ENCODE measurements at regions of chr5 and their contacts with region 1.

Region 1: DNA sequence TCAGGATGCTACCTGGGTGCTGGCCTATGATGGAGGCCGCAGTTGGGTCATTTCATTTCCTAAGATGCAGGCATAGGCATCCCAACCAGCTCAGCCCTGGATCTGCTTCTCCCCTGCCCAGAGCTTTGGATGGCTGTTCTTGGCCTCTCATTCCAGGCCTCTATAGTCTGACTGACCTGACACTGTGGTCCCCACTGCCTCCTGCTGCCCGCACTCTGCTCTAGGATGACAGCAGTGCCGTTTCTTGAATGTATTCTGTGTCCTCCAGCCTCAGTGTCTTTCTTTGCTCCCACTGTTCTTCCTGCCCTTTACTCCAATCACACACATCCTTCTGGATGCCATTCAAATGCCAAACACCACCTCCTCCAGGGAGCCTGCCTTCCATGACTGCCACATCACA is 235.7 kb downstream of the HSPA4 start:
- DNase-seq: peak; percentile 67
- H3K4me3 Mint-ChIP-seq: no peak overlapping the region
- H3K27ac Mint-ChIP-seq: no peak overlapping the region
- H3K4me1 Mint-ChIP-seq: peaks cover 38% of the 10 kb centered on the region
- H3K27me3 Mint-ChIP-seq: no peaks in the 10 kb centered on the region
- CTCF ChIP-seq: peak; percentile 66

Region 2: GRCh38 chr5:133116601-133117000 is 170.9 kb before region 1 on chr5:
- CTCF ChIA-PET with region 1: interaction called, 141 read pairs
- POLR2A ChIA-PET with region 1: interaction called, 32 read pairs
- intact Hi-C with region 1: loop called (anchors 1 kb)
- DNase-seq: no peak
- H3K4me3 Mint-ChIP-seq: no peak overlapping the region
- H3K27ac Mint-ChIP-seq: no peak overlapping the region
- H3K4me1 Mint-ChIP-seq: peaks cover 10% of the 10 kb centered on the region
- H3K27me3 Mint-ChIP-seq: no peaks in the 10 kb centered on the region
- CTCF ChIP-seq: no peak

Region 3: DNA sequence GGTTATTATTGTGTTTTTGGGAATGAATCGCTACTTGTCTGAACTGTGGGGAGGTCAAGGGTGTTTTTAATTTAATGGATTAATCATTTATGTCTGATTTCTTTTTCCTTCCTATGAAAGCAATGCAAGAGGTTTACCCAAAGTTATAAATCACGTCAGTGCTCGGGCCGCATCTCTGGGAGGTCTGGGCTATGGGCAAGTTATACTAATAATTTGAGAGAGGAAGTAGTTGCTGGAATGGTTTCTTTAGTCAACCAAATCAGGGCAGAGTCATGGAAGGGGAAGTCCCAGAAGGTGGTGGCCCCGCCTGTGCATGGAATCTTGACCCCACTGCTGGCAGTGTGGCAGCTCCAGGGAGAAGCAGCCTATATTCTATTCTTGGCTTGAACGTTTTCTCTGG is 55.5 kb before region 1 on chr5:
- CTCF ChIA-PET with region 1: interaction called, 8 read pairs
- POLR2A ChIA-PET with region 1: interaction called, 19 read pairs
- intact Hi-C with region 1: no loop called
- DNase-seq: peak; percentile 31
- H3K4me3 Mint-ChIP-seq: no peak overlapping the region
- H3K27ac Mint-ChIP-seq: no peak overlapping the region
- H3K4me1 Mint-ChIP-seq: peaks cover 59% of the 10 kb centered on the region
- H3K27me3 Mint-ChIP-seq: no peaks in the 10 kb centered on the region
- CTCF ChIP-seq: no peak

Region 4: GRCh38 chr5:133273661-133274596 is 13.6 kb before region 1 on chr5:
- CTCF ChIA-PET with region 1: interaction called, 3 read pairs
- POLR2A ChIA-PET with region 1: interaction called, 10 read pairs
- intact Hi-C with region 1: no loop called
- DNase-seq: no peak
- H3K4me3 Mint-ChIP-seq: no peak overlapping the region
- H3K27ac Mint-ChIP-seq: no peak overlapping the region
- H3K4me1 Mint-ChIP-seq: peaks cover 6% of the 10 kb centered on the region
- H3K27me3 Mint-ChIP-seq: no peaks in the 10 kb centered on the region
- CTCF ChIP-seq: no peak

Region 5: DNA sequence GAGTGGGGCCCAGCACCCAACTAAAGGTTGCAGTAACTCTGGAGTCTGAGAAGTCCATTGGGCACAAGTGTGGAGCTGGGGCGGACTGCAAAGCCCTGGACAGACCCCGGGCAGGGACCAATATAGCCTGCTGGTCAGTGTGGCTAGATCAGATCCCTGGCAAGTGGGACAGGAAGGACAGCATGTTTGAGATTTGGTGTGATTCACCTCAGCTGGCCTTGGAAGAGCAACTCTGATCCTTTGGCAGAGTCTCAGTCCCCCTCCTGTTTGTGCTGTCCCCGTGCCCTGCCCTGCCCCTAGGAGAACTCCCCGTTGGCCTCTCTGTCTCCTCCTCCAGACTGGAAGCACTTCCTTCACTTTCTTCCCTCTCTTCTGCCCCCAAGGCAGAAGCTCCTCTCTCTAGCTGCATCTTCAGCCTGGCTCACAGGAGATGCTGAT is 69.5 kb after region 1 on chr5:
- CTCF ChIA-PET with region 1: no interaction called
- POLR2A ChIA-PET with region 1: no interaction called
- intact Hi-C with region 1: no loop called
- DNase-seq: no peak
- H3K4me3 Mint-ChIP-seq: no peak overlapping the region
- H3K27ac Mint-ChIP-seq: no peak overlapping the region
- H3K4me1 Mint-ChIP-seq: no peaks in the 10 kb centered on the region
- H3K27me3 Mint-ChIP-seq: no peaks in the 10 kb centered on the region
- CTCF ChIP-seq: no peak

Region 6: GRCh38 chr5:133460172-133460758 is 172.8 kb after region 1 on chr5:
- CTCF ChIA-PET with region 1: interaction called, 3 read pairs
- POLR2A ChIA-PET with region 1: no interaction called
- intact Hi-C with region 1: loop called (anchors 10 kb)
- DNase-seq: peak; percentile 62
- H3K4me3 Mint-ChIP-seq: no peak overlapping the region
- H3K27ac Mint-ChIP-seq: no peak overlapping the region
- H3K4me1 Mint-ChIP-seq: peaks cover 21% of the 10 kb centered on the region
- H3K27me3 Mint-ChIP-seq: no peaks in the 10 kb centered on the region
- CTCF ChIP-seq: peak; percentile 95

Region 7: DNA sequence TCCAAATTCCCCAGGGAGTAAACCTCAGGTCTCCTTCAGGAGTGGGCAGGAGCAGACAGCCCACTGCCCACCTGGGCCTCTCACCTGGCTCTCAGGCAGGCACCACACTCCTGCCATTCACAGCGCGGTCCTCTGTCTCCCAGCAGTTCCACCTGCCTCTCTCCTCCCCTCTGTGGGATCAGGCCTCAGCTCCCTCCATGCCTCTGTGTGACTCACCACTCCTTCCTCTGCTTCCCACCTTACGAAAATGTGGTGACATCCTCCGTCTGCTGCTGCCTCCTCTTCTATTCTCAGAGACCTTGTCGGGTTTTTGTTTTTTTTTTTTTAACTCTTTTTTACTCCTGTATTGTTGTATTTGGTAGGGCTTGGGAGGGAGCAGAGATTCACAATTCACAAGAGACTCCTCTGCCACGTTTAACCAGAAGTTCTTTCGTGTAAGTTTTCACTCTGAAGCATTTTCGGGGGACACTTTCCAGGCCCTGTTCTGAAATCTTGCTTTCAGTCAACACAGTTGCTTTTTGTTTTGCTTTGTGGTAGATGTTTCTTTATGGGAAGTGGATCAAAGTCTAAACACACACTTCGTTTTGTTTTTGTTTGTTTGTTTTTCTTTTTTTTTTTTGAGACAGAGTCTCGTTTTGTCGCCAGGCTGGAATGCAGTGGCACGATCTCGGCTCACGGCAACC is 1145.3 kb after region 1 on chr5:
- CTCF ChIA-PET with region 1: no interaction called
- POLR2A ChIA-PET with region 1: no interaction called
- intact Hi-C with region 1: no loop called
- DNase-seq: peak; percentile 76
- H3K4me3 Mint-ChIP-seq: no peak overlapping the region
- H3K27ac Mint-ChIP-seq: peak overlapping the region; percentile 23
- H3K4me1 Mint-ChIP-seq: peaks cover 44% of the 10 kb centered on the region
- H3K27me3 Mint-ChIP-seq: no peaks in the 10 kb centered on the region
- CTCF ChIP-seq: no peak